CD4-positive, alpha-beta memory T cell (primary cell): ENCODE measurements at regions of chr1 and their contacts with region 1.

Region 1: GRCh38 chr1:154198756-154199562 is 7.1 kb upstream of the TPM3 start:
- DNase-seq: peak; percentile 53 to 62 (median 58)
- H3K4me3 ChIP-seq: no peak overlapping the region
- H3K4me3 Mint-ChIP-seq: no peak overlapping the region
- H3K27ac ChIP-seq: no peak overlapping the region
- H3K27ac Mint-ChIP-seq: peak overlapping the region in 2 of 7 donors; percentile 64 to 74
- H3K4me1 ChIP-seq: peaks cover 7% of the 10 kb centered on the region
- H3K4me1 Mint-ChIP-seq: no peaks in the 10 kb centered on the region
- H3K27me3 ChIP-seq: no peaks in the 10 kb centered on the region
- H3K27me3 Mint-ChIP-seq: peaks cover 0 to 3% of the 10 kb centered on the region in 2 donors

Region 2: DNA sequence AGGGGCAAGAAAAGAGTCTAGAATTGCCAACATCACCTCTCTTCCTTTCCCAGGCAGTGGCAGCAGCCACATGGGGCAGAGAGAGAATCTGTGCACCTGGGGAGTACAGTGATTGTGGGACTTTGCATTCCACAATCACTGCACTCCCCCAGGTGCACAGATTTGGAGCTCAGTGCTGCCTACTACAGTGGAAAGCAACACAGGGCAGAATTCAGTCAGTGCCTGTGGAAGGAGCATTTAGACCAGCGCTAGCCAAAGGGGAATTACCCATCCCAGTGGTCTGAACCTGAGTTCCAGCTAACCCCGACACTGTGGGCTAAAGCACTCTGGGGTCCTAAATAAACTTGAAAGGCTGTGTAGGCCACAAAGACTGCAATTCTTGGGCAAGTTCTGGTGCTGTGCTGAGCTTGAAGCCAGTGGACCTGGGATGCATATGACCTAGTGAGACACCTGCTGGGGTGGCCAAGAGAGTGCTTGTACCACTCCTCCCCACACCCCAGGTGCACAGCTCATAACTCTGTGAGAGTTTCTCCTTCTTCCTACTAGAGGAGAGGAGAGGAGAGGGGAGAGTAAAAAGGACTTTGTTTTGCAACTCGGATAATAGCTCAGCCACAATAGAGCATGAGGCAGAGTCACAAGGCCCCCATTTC is 94.4 kb before region 1 on chr1:
- CTCF ChIA-PET with region 1: no interaction called
- POLR2A ChIA-PET with region 1: no interaction called
- intact Hi-C with region 1: no loop called
- DNase-seq: no peak
- H3K4me3 ChIP-seq: no peak overlapping the region
- H3K4me3 Mint-ChIP-seq: no peak overlapping the region
- H3K27ac ChIP-seq: no peak overlapping the region
- H3K27ac Mint-ChIP-seq: peak overlapping the region in 1 of 7 donors; percentile 72
- H3K4me1 ChIP-seq: no peaks in the 10 kb centered on the region
- H3K4me1 Mint-ChIP-seq: no peaks in the 10 kb centered on the region
- H3K27me3 ChIP-seq: no peaks in the 10 kb centered on the region
- H3K27me3 Mint-ChIP-seq: peaks cover 0 to 2% of the 10 kb centered on the region in 2 donors

Region 3: GRCh38 chr1:154263465-154264332 is 64.7 kb after region 1 on chr1:
- CTCF ChIA-PET with region 1: interaction called, 12 read pairs
- POLR2A ChIA-PET with region 1: interaction called, 3 read pairs
- intact Hi-C with region 1: no loop called
- DNase-seq: no peak
- H3K4me3 ChIP-seq: no peak overlapping the region
- H3K4me3 Mint-ChIP-seq: no peak overlapping the region
- H3K27ac ChIP-seq: no peak overlapping the region
- H3K27ac Mint-ChIP-seq: peak overlapping the region; percentile 59 to 91 (median 87)
- H3K4me1 ChIP-seq: peaks cover 30% of the 10 kb centered on the region
- H3K4me1 Mint-ChIP-seq: peaks cover 25 to 40% (median 34%) of the 10 kb centered on the region in 4 donors
- H3K27me3 ChIP-seq: no peaks in the 10 kb centered on the region
- H3K27me3 Mint-ChIP-seq: no peaks in the 10 kb centered on the region

Region 4: GRCh38 chr1:154344977-154345837 is 146.2 kb after region 1 on chr1:
- CTCF ChIA-PET with region 1: interaction called, 19 read pairs
- POLR2A ChIA-PET with region 1: interaction called, 3 read pairs
- intact Hi-C with region 1: loop called (anchors 1 kb)
- DNase-seq: peak; percentile 75 to 84 (median 81)
- H3K4me3 ChIP-seq: peak overlapping the region; percentile 62
- H3K4me3 Mint-ChIP-seq: peak overlapping the region; percentile 87 to 99 (median 94)
- H3K27ac ChIP-seq: peak overlapping the region; percentile 66
- H3K27ac Mint-ChIP-seq: peak overlapping the region; percentile 86 to 98 (median 92)
- H3K4me1 ChIP-seq: peaks cover 96% of the 10 kb centered on the region
- H3K4me1 Mint-ChIP-seq: peaks cover 54 to 98% (median 76%) of the 10 kb centered on the region in 4 donors
- H3K27me3 ChIP-seq: no peaks in the 10 kb centered on the region
- H3K27me3 Mint-ChIP-seq: no peaks in the 10 kb centered on the region